Endothelial cell of umbilical vein (primary cell): ENCODE measurements at regions of chr2 and their contacts with region 1.

Region 1: GRCh38 chr2:168920504-168921157 is 19.5 kb downstream of the G6PC2 start:
- DNase-seq: peak; percentile 58
- H3K4me3 ChIP-seq: no peak overlapping the region
- H3K27ac ChIP-seq: no peak overlapping the region
- H3K4me1 ChIP-seq: no peaks in the 10 kb centered on the region
- H3K27me3 ChIP-seq: peaks cover 2 to 3% of the 10 kb centered on the region in 2 experiments
- CTCF ChIP-seq: peak; percentile 30 to 34
- POLR2A ChIP-seq: no peak

Region 2: DNA sequence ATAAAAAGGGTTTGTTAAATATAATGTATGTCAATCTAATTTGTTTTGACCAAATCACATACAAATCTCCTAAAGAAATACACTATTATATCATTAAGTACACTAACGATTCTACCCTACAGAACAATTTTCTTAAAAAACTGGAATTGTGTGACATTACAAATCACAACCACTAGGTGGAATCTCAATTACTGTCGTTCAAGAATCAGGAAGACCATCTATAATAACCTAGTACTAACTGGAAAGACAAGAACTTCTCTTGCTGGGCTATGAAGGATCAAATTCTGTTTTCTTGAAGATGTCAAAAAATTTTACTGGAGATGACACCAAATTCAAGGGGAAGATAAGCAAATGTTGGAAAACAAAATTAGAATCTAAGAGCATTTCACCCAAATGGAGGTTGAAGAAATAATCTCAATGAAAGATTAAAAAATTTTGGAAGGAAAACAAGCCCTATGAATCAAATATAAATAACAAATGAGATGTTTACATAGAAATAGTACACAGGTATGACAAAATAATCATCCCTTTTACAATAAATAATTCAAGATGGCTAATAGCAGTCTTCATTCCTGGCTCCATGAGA is 784.1 kb before region 1 on chr2:
- CTCF ChIA-PET with region 1: interaction called, 3 read pairs
- POLR2A ChIA-PET with region 1: no interaction called
- dilution Hi-C with region 1: no loop called
- intact Hi-C with region 1: loop called (anchors 5 kb)
- DNase-seq: peak; percentile 57
- H3K4me3 ChIP-seq: no peak overlapping the region
- H3K27ac ChIP-seq: no peak overlapping the region
- H3K4me1 ChIP-seq: peaks cover 9% of the 10 kb centered on the region
- H3K27me3 ChIP-seq: no peaks in the 10 kb centered on the region
- CTCF ChIP-seq: peak; percentile 19 to 36
- POLR2A ChIP-seq: no peak

Region 3: GRCh38 chr2:168738062-168738461 is 182.6 kb before region 1 on chr2:
- CTCF ChIA-PET with region 1: no interaction called
- POLR2A ChIA-PET with region 1: no interaction called
- dilution Hi-C with region 1: no loop called
- intact Hi-C with region 1: no loop called
- DNase-seq: peak; percentile 24
- H3K4me3 ChIP-seq: no peak overlapping the region
- H3K27ac ChIP-seq: no peak overlapping the region
- H3K4me1 ChIP-seq: no peaks in the 10 kb centered on the region
- H3K27me3 ChIP-seq: no peaks in the 10 kb centered on the region
- CTCF ChIP-seq: no peak
- POLR2A ChIP-seq: no peak

Region 4: DNA sequence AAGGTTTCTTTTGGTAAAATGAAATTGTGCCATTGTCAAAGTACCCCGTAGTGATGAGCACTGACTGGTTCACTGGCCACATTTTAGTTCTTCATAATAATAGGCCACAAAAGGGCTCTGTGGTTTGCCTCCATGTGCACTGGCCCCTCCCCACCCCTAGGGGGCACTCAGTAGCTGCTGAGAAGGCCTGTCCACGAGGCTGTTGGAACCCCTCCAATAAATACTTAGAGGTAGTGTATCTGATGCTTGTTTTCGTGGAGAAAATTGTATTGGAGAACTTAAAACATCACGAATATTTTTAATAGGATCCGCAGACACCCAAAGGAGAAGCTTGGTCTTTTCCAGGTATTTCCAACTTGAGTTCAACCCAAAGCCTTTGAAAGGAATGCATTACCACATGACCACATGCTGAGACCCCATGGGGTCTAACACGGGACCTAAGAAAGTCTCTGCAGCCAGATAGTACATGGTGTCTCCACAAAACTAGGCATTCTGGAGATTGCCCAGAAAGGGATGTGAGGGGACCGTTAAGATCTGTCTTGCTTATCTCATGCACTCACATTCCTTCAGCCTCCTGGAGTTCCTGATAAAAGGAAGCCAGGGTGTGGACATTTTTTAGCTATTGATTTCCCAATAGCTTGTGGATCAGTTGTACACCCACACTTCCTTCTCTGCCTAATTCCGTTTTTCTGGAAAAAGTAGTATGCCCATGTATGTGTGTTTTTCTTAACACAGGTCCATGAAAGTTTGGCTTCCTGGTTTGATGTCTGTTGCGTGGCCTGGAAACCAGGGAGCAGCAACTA is 146.7 kb before region 1 on chr2:
- CTCF ChIA-PET with region 1: interaction called, 79 read pairs
- POLR2A ChIA-PET with region 1: no interaction called
- dilution Hi-C with region 1: no loop called
- intact Hi-C with region 1: loop called (anchors 1 kb)
- DNase-seq: peak; percentile 82
- H3K4me3 ChIP-seq: no peak overlapping the region
- H3K27ac ChIP-seq: no peak overlapping the region
- H3K4me1 ChIP-seq: peaks cover 4% of the 10 kb centered on the region
- H3K27me3 ChIP-seq: no peaks in the 10 kb centered on the region
- CTCF ChIP-seq: peak; percentile 93 to 96
- POLR2A ChIP-seq: no peak

Region 5: GRCh38 chr2:168907940-168908662 is 12.5 kb before region 1 on chr2:
- CTCF ChIA-PET with region 1: interaction called, 5 read pairs
- POLR2A ChIA-PET with region 1: no interaction called
- dilution Hi-C with region 1: no loop called
- intact Hi-C with region 1: loop called (anchors 1 kb)
- DNase-seq: no peak
- H3K4me3 ChIP-seq: no peak overlapping the region
- H3K27ac ChIP-seq: no peak overlapping the region
- H3K4me1 ChIP-seq: no peaks in the 10 kb centered on the region
- H3K27me3 ChIP-seq: peaks cover 21 to 31% of the 10 kb centered on the region in 2 experiments
- CTCF ChIP-seq: no peak
- POLR2A ChIP-seq: no peak